Aorta (tissue), 5 donors: ENCODE measurements at regions of chr1 and their contacts with region 1.

Region 1: GRCh38 chr1:181296180-181296579 is 187.1 kb upstream of the CACNA1E start:
- DNase-seq: no peak
- ATAC-seq: no peak
- H3K4me3 ChIP-seq: no peak overlapping the region
- H3K27ac ChIP-seq: no peak overlapping the region
- H3K4me1 ChIP-seq: no peaks in the 10 kb centered on the region
- H3K27me3 ChIP-seq: no peaks in the 10 kb centered on the region

Region 2: DNA sequence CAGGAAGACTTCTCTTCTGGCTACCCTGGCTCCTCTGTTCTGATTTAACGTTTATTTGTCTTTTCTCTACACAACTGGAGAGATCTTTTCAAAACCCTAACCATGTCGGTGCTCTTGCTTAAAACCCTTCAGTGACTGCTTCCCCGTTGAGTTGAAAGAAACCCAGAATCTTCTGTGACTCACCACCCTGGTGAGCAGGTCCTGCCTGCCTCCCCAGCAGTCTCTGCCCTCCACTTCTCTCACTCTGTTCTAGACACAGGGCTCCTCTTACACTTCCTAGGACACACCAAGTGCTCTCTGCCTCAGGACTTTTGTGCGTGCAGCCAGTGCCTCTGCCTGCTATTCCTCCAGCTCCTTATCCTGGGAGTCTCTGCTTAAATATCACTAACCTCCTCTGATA is 76.2 kb before region 1 on chr1:
- intact Hi-C with region 1: loop called in 1 of 2 experiments (anchors 5 kb)
- DNase-seq: no peak
- ATAC-seq: no peak
- H3K4me3 ChIP-seq: no peak overlapping the region
- H3K27ac ChIP-seq: no peak overlapping the region
- H3K4me1 ChIP-seq: no peaks in the 10 kb centered on the region
- H3K27me3 ChIP-seq: no peaks in the 10 kb centered on the region

Region 3: GRCh38 chr1:181369416-181369815 is 73.2 kb after region 1 on chr1:
- intact Hi-C with region 1: no loop called
- DNase-seq: no peak
- ATAC-seq: no peak
- H3K4me3 ChIP-seq: no peak overlapping the region
- H3K27ac ChIP-seq: no peak overlapping the region
- H3K4me1 ChIP-seq: no peaks in the 10 kb centered on the region
- H3K27me3 ChIP-seq: no peaks in the 10 kb centered on the region